ENCODE measurements at regions of chr2 and their contacts with region 1.

Region 1: DNA sequence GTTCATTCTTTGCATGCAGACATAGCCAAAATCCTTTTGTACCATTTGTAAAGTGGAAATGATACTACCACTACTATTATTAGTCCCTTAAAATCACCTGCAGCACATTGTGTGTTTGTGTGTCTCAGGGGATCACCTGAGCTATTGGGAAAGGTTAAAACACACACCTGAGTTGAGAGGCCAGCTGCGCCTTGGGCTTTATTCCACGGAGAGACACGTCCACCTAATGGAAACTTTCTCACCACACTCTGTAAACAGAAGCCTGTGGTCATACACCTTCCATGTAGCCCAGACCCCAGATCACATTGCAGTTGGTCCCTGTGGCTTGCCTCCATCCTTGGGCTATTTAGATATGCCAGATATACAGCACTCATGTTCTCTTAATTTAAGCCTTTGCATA is 81.8 kb upstream of the SH3BP4 start:
- DNase-seq: no peak
- H3K4me3 ChIP-seq: no peak overlapping the region
- H3K27ac ChIP-seq: no peak overlapping the region
- H3K4me1 ChIP-seq: no peaks in the 10 kb centered on the region
- H3K27me3 ChIP-seq: no peaks in the 10 kb centered on the region
- CTCF ChIP-seq: no peak
- EP300 ChIP-seq: no peak
- POLR2A ChIP-seq: no peak
- RAD21 ChIP-seq: no peak

Region 2: GRCh38 chr2:234500394-234501006 is 369.5 kb before region 1 on chr2:
- CTCF ChIA-PET with region 1: no interaction called
- POLR2A ChIA-PET with region 1: no interaction called
- DNase-seq: peak in 1 of 2 experiments; percentile 57
- H3K4me3 ChIP-seq: no peak overlapping the region
- H3K27ac ChIP-seq: no peak overlapping the region
- H3K4me1 ChIP-seq: peaks cover 4 to 16% (median 10%) of the 10 kb centered on the region in 4 experiments
- H3K27me3 ChIP-seq: peaks cover 0 to 11% (median 3%) of the 10 kb centered on the region in 4 experiments; a peak in 4 of 7 replicates
- CTCF ChIP-seq: peak; percentile 11 to 79 (median 64)
- EP300 ChIP-seq: no peak
- POLR2A ChIP-seq: no peak
- RAD21 ChIP-seq: peak; percentile 91 to 97

Region 3: GRCh38 chr2:234881413-234882241 is 11.7 kb after region 1 on chr2:
- CTCF ChIA-PET with region 1: interaction called, 11 read pairs
- POLR2A ChIA-PET with region 1: no interaction called
- DNase-seq: peak; percentile 64 to 91
- H3K4me3 ChIP-seq: no peak overlapping the region
- H3K27ac ChIP-seq: no peak overlapping the region
- H3K4me1 ChIP-seq: peaks cover 0 to 3% (median 0%) of the 10 kb centered on the region in 4 experiments; a peak in 2 of 7 replicates
- H3K27me3 ChIP-seq: no peaks in the 10 kb centered on the region
- CTCF ChIP-seq: peak; percentile 64 to 88 (median 78)
- EP300 ChIP-seq: no peak
- POLR2A ChIP-seq: no peak
- RAD21 ChIP-seq: peak; percentile 58 to 71

Region 4: DNA sequence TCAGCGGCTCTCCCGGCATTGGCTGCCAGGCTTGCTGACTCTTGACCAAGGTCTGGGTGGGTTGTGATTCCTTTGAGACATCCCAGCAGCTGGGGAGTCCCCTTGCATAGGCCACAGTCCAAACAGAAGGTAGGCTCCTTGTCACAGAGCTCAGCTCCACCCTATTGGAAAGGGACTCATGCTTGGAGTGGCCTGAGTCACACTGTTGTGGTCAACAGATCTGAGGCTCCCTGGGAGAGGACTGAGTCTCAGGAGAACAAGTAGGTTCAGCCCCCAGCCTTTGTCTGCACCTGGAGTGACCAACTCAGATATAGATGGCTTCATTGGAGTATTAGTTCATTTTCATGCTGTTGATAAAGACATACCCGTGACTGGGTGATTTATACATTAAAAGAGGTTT is 49.7 kb after region 1 on chr2:
- CTCF ChIA-PET with region 1: no interaction called
- POLR2A ChIA-PET with region 1: no interaction called
- DNase-seq: no peak
- H3K4me3 ChIP-seq: no peak overlapping the region
- H3K27ac ChIP-seq: no peak overlapping the region
- H3K4me1 ChIP-seq: peaks cover 0 to 6% (median 1%) of the 10 kb centered on the region in 4 experiments; a peak in 1 of 7 replicates
- H3K27me3 ChIP-seq: no peaks in the 10 kb centered on the region; a peak in 1 of 7 replicates
- CTCF ChIP-seq: no peak
- EP300 ChIP-seq: no peak
- POLR2A ChIP-seq: no peak
- RAD21 ChIP-seq: no peak

Measured in H1 (cell line).